ENCODE measurements at regions of chr15 and their contacts with region 1.

Region 1: DNA sequence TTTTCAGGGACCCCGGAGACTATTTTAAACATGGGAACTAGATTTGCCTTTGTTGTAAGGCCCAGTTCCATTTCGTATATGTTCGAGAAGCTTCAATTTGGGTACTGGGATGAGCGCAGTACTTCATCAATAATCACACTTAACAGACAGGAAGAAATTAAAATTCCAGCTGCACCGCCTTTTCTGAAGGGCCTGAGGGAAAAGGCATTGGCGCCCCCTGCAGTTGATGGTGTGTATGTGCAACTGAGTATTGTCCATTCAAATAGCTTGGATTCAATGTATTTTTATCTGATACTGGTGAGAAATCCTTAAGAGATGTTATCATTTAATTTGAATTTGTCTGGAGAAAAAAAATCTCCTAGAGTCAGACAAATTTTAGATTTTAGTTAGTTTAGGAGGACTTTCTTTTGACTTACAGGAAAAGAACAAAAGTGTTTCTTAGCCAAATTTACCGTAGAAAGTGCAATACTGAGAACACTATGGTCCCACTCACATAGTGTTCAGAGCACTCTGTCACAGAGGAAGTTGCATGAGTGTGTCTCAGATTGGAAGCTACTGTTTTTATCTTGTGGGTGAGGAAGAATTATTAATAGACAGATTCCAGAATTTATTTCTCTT is 5.4 kb upstream of the ALDH1A2 start:
- DNase-seq: peak; percentile 38
- H3K4me3 ChIP-seq: peak overlapping the region in 1 of 2 experiments; percentile 46; a peak in 1 of 4 replicates
- H3K27ac ChIP-seq: no peak overlapping the region
- H3K4me1 ChIP-seq: no peaks in the 10 kb centered on the region; a peak in 1 of 4 replicates
- H3K27me3 ChIP-seq: peaks cover 15% of the 10 kb centered on the region
- CTCF ChIP-seq: peak; percentile 99
- EP300 ChIP-seq: no peak
- RAD21 ChIP-seq: peak; percentile 86

Region 2: DNA sequence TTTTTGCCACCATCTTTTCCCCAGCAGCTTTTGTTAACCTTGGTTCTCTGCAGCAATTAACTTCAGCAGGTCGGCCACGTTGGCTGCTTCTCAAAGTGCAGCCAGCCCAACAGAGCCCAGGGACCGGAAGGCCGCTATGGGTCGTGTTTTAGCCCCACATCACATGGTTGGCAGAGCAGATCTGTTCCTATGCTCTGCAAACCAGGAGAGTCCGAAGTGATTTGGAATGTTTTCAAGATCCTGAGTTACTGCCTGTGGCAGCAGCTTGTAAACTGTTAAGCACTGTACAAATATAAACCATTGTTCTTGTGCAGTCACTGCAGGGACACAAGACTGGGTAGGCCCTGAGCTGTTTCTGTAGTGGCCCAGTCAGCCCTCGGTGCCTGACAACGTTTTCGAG is 548.8 kb before region 1 on chr15:
- CTCF ChIA-PET with region 1: no interaction called
- POLR2A ChIA-PET with region 1: no interaction called
- DNase-seq: no peak
- H3K4me3 ChIP-seq: no peak overlapping the region
- H3K27ac ChIP-seq: no peak overlapping the region
- H3K4me1 ChIP-seq: peaks cover 0 to 14% of the 10 kb centered on the region in 2 experiments; a peak in 1 of 4 replicates
- H3K27me3 ChIP-seq: no peaks in the 10 kb centered on the region
- CTCF ChIP-seq: no peak
- EP300 ChIP-seq: no peak
- RAD21 ChIP-seq: no peak

Region 3: DNA sequence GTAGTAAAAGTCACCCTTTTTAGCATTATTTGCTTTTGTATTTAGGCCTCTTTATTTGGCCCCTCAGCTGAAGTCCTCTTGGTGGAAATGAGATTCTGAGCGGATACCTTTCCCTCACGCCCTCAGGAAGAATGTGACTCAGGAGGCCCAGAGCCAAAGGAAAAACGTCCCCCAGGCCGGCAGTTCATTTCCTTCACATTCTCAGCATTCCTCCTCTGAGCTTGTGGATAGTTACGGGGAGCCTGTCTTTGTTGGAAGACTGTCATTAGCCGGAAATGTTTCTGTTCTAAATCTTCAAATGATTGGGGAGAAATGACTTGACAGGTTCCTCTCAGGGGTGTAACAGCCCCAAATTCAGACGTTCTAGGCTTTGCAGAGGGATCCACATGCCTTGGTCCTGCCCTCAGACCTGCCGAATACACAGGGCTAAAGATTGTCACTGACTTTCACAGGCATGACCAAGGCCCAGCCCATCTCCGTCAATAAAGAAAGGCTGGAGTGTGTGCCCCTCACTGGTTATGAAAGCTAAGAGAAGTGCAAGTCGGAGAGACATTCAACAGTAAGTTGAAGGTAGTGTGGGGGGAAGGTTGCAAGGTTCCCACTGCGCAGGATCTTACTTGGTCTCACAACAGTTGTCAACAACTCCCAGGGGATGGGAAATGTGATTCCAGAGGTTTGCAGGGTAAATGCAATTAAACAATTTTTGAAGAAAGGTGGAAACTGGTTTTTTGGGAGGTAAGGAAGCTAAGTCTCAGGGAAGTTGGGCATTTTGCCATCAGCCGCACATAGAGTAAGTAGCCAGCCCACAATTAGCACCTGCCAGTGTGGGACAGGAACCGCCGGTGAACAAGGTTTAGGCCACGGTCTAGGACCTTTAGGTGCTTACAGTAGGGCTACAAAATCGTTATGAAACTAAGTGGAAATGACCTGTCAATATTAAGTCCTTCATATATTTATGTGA is 518.9 kb before region 1 on chr15:
- CTCF ChIA-PET with region 1: interaction called, 11 read pairs
- POLR2A ChIA-PET with region 1: no interaction called
- DNase-seq: no peak
- H3K4me3 ChIP-seq: no peak overlapping the region
- H3K27ac ChIP-seq: peak overlapping the region; percentile 69 to 72
- H3K4me1 ChIP-seq: peaks cover 25 to 35% of the 10 kb centered on the region in 2 experiments; a peak in 3 of 4 replicates
- H3K27me3 ChIP-seq: no peaks in the 10 kb centered on the region
- CTCF ChIP-seq: no peak
- EP300 ChIP-seq: peak; percentile 16 to 76; a peak in 2 of 4 replicates
- RAD21 ChIP-seq: no peak

Region 4: GRCh38 chr15:57720867-57721266 is 350.0 kb before region 1 on chr15:
- CTCF ChIA-PET with region 1: interaction called, 11 read pairs
- POLR2A ChIA-PET with region 1: no interaction called
- DNase-seq: no peak
- H3K4me3 ChIP-seq: no peak overlapping the region
- H3K27ac ChIP-seq: no peak overlapping the region
- H3K4me1 ChIP-seq: no peaks in the 10 kb centered on the region
- H3K27me3 ChIP-seq: no peaks in the 10 kb centered on the region
- CTCF ChIP-seq: no peak
- EP300 ChIP-seq: no peak
- RAD21 ChIP-seq: no peak

Region 5: GRCh38 chr15:57861036-57861638 is 209.8 kb before region 1 on chr15:
- CTCF ChIA-PET with region 1: interaction called, 216 read pairs
- POLR2A ChIA-PET with region 1: no interaction called
- DNase-seq: peak; percentile 24
- H3K4me3 ChIP-seq: no peak overlapping the region; a peak in 1 of 4 replicates
- H3K27ac ChIP-seq: no peak overlapping the region
- H3K4me1 ChIP-seq: no peaks in the 10 kb centered on the region
- H3K27me3 ChIP-seq: no peaks in the 10 kb centered on the region; the same call in 1 of the 2 replicates
- CTCF ChIP-seq: peak; percentile 90
- EP300 ChIP-seq: no peak
- RAD21 ChIP-seq: peak; percentile 81

Region 6: GRCh38 chr15:57923306-57923705 is 147.6 kb before region 1 on chr15:
- CTCF ChIA-PET with region 1: interaction called, 14 read pairs
- POLR2A ChIA-PET with region 1: no interaction called
- DNase-seq: no peak
- H3K4me3 ChIP-seq: no peak overlapping the region
- H3K27ac ChIP-seq: no peak overlapping the region
- H3K4me1 ChIP-seq: peaks cover 0 to 6% of the 10 kb centered on the region in 2 experiments; a peak in 1 of 4 replicates
- H3K27me3 ChIP-seq: no peaks in the 10 kb centered on the region
- CTCF ChIP-seq: no peak
- EP300 ChIP-seq: no peak
- RAD21 ChIP-seq: no peak

Region 7: GRCh38 chr15:58057559-58057958 is 13.4 kb before region 1 on chr15:
- CTCF ChIA-PET with region 1: interaction called, 18 read pairs
- POLR2A ChIA-PET with region 1: no interaction called
- DNase-seq: no peak
- H3K4me3 ChIP-seq: no peak overlapping the region
- H3K27ac ChIP-seq: no peak overlapping the region
- H3K4me1 ChIP-seq: no peaks in the 10 kb centered on the region; a peak in 1 of 4 replicates
- H3K27me3 ChIP-seq: 0 out of 2 replicates have a peak, but pooled peaks cover 7% of the 10 kb centered on the region
- CTCF ChIP-seq: no peak
- EP300 ChIP-seq: no peak
- RAD21 ChIP-seq: no peak

Region 8: DNA sequence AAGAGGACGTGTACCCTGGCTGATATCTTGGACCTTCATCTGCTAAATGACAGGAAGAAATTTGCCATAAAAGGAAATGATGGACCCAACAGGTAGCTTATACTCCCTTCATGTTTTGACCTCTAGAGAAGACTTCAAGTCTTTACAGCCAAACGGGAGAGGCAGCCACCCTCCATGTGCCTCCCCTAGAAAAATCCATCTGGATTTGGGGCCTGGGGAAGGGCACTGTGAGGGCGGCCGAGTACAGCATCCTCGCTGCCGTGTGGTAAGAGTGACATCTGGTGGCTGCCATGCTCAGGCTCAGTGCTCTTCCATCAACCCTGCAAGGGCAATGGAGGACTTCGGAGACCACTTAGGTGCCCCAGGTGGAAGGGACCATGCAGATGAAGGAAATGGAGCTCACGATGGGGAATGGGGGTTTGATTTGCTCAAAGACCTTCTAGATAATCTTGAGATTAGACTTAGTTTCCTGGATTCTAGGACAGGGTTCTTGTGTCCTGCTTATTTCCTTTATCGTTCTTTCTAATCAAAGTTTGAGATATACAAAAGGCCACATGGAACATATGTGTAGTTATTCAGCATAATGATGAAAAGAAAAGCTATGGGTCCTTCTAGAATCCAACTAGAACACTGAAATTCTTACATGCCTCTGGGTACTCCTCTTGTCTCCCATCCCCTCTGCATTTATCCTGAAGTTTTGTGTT is 111.7 kb after region 1 on chr15:
- CTCF ChIA-PET with region 1: interaction called, 52 read pairs
- POLR2A ChIA-PET with region 1: no interaction called
- DNase-seq: peak; percentile 73
- H3K4me3 ChIP-seq: no peak overlapping the region
- H3K27ac ChIP-seq: no peak overlapping the region
- H3K4me1 ChIP-seq: no peaks in the 10 kb centered on the region; a peak in 1 of 4 replicates
- H3K27me3 ChIP-seq: peaks cover 8% of the 10 kb centered on the region; the same call in 1 of the 2 replicates
- CTCF ChIP-seq: peak; percentile 75
- EP300 ChIP-seq: no peak
- RAD21 ChIP-seq: peak; percentile 94